Caco-2 (cell line): ENCODE measurements at regions of chr14 and their contacts with region 1.

Region 1: DNA sequence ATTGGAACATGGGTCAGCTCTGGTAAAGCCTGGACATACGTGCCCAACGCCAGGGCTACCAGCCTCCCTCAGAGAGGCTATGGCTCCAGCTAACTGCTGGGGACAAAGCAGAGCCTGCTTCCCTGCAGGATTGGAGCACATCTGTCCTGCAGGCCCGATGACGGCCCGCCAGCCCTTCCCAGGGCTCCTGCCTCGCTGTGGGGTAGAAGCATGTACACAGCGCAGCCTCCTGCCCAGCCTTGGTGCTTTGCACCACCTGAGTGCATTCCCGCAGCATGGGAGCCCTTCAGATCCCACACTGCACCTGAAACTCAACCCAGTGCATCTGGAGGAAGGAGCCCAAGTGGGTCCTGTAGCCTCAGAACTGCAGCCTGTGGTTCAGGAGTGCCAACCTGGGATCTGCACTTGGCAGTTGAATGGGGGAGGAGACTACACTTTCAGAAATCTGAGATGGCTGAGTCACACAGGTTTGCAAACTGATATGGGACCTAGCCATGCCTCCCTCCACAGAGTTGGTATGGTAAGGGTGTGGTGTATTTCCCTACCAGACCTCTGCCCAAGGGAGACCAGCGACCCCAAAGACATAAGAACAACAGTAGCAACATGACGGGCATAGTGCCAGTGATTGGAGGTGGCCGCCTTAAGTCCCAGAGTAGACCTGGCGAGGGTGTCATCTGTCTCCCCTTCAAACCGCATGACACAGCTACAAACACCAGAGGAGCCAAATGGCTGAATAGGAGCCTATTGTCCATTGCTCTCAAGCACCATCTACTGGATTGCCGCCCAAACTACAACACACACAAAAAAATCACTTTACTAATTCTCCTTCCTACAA is 273.9 kb upstream of the MIS18BP1 start:
- DNase-seq: peak; percentile 46 to 56
- H3K4me3 ChIP-seq: no peak overlapping the region
- H3K4me3 Mint-ChIP-seq: no peak overlapping the region
- H3K27ac Mint-ChIP-seq: no peak overlapping the region
- H3K4me1 ChIP-seq: no peaks in the 10 kb centered on the region; the same call in 1 of the 2 replicates
- H3K4me1 Mint-ChIP-seq: no peaks in the 10 kb centered on the region
- H3K27me3 ChIP-seq: no peaks in the 10 kb centered on the region; the same call in 1 of the 2 replicates
- H3K27me3 Mint-ChIP-seq: peaks cover 2% of the 10 kb centered on the region
- CTCF ChIP-seq: peak; percentile 69 to 72

Region 2: GRCh38 chr14:45287610-45288009 is 239.3 kb before region 1 on chr14:
- CTCF ChIA-PET with region 1: no interaction called
- POLR2A ChIA-PET with region 1: no interaction called
- intact Hi-C with region 1: loop called (anchors 2 kb)
- DNase-seq: no peak
- H3K4me3 ChIP-seq: no peak overlapping the region
- H3K4me3 Mint-ChIP-seq: no peak overlapping the region
- H3K27ac Mint-ChIP-seq: no peak overlapping the region
- H3K4me1 ChIP-seq: no peaks in the 10 kb centered on the region
- H3K4me1 Mint-ChIP-seq: no peaks in the 10 kb centered on the region
- H3K27me3 ChIP-seq: no peaks in the 10 kb centered on the region
- H3K27me3 Mint-ChIP-seq: peaks cover 14% of the 10 kb centered on the region
- CTCF ChIP-seq: no peak

Region 3: DNA sequence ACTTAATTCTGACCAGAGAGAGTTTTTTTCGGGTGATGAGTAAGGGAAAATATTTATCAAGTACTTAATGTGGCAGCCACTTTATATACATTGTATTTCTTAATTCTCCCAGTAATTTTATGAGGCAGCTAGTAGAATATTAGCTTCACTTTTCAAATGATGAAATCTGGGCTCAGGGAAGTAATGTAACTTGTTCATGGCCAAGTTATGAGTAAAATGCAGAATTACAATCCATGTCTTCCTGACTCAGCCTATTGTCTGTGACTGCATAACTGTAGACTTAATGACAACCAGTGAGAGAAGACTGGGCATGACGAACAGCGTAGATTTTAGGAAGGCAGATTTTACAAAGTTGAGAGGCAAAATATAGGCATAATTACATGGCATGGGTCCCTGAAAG is 167.2 kb before region 1 on chr14:
- CTCF ChIA-PET with region 1: no interaction called
- POLR2A ChIA-PET with region 1: no interaction called
- intact Hi-C with region 1: loop called (anchors 1 kb)
- DNase-seq: no peak
- H3K4me3 ChIP-seq: no peak overlapping the region
- H3K4me3 Mint-ChIP-seq: no peak overlapping the region
- H3K27ac Mint-ChIP-seq: no peak overlapping the region
- H3K4me1 ChIP-seq: no peaks in the 10 kb centered on the region
- H3K4me1 Mint-ChIP-seq: no peaks in the 10 kb centered on the region
- H3K27me3 ChIP-seq: no peaks in the 10 kb centered on the region
- H3K27me3 Mint-ChIP-seq: peaks cover 10% of the 10 kb centered on the region
- CTCF ChIP-seq: no peak

Region 4: DNA sequence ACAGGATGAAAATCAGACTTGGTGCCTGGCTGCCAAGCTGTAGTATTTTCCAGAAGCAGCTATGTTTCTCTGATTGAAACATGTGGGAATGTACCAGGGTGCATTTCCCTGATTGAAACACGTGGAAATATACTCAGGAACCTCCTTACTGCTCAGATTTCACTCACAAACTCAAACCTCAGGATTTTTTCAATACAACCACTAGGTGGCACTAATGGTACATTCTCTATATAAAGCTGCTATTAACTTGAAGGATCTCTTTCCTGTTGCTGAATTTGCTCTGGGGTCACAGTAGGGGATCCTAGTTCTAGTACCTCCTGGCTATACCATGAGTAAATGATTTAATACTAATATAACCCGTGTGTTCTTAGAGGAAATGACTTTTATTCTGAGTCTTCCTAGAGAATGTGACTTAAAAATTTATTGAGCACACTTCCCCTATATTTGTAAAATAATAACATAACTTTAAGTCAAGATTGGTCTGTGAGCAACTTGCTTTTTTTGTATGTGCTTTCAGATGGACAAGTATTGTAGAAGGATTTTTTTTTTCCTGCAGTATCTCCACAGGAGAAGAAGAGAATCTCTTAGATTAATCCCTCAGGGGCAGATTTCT is 100.2 kb before region 1 on chr14:
- CTCF ChIA-PET with region 1: interaction called, 7 read pairs
- POLR2A ChIA-PET with region 1: no interaction called
- intact Hi-C with region 1: loop called (anchors 1 kb)
- DNase-seq: peak in 1 of 2 experiments; percentile 39
- H3K4me3 ChIP-seq: no peak overlapping the region
- H3K4me3 Mint-ChIP-seq: no peak overlapping the region
- H3K27ac Mint-ChIP-seq: no peak overlapping the region
- H3K4me1 ChIP-seq: no peaks in the 10 kb centered on the region
- H3K4me1 Mint-ChIP-seq: no peaks in the 10 kb centered on the region
- H3K27me3 ChIP-seq: no peaks in the 10 kb centered on the region
- H3K27me3 Mint-ChIP-seq: no peaks in the 10 kb centered on the region
- CTCF ChIP-seq: peak; percentile 56 to 68

Region 5: DNA sequence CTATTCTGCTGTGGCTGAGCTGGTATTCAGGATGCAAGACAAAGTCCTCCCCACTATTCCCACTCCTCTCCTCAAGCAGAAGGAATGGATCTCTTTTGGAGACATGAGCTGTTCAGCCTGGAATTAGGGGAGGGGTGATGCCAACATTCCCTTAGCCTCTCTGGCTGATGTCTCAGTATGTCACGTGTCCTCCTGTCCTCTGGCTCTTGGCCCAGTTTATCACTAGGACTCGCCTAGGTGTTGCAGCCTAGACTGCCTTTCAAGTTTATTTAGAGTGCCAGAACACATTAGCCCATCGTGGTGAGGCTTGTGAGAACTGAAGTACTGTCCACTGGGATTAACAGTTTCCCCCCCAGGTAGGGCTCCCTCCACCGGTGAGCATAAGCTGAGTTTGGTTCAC is 34.1 kb before region 1 on chr14:
- CTCF ChIA-PET with region 1: no interaction called
- POLR2A ChIA-PET with region 1: no interaction called
- intact Hi-C with region 1: loop called (anchors 1 kb)
- DNase-seq: no peak
- H3K4me3 ChIP-seq: no peak overlapping the region
- H3K4me3 Mint-ChIP-seq: no peak overlapping the region
- H3K27ac Mint-ChIP-seq: no peak overlapping the region
- H3K4me1 ChIP-seq: no peaks in the 10 kb centered on the region
- H3K4me1 Mint-ChIP-seq: no peaks in the 10 kb centered on the region
- H3K27me3 ChIP-seq: no peaks in the 10 kb centered on the region
- H3K27me3 Mint-ChIP-seq: no peaks in the 10 kb centered on the region
- CTCF ChIP-seq: no peak

Region 6: GRCh38 chr14:46290706-46291105 is 763.8 kb after region 1 on chr14:
- CTCF ChIA-PET with region 1: no interaction called
- POLR2A ChIA-PET with region 1: no interaction called
- intact Hi-C with region 1: no loop called
- DNase-seq: no peak
- H3K4me3 ChIP-seq: no peak overlapping the region
- H3K4me3 Mint-ChIP-seq: no peak overlapping the region
- H3K27ac Mint-ChIP-seq: no peak overlapping the region
- H3K4me1 ChIP-seq: no peaks in the 10 kb centered on the region
- H3K4me1 Mint-ChIP-seq: no peaks in the 10 kb centered on the region
- H3K27me3 ChIP-seq: no peaks in the 10 kb centered on the region
- H3K27me3 Mint-ChIP-seq: no peaks in the 10 kb centered on the region
- CTCF ChIP-seq: no peak